ENCODE measurements at regions of chr1 and their contacts with region 1.

Region 1: GRCh38 chr1:155859234-155859829 is at the start of gene SYT11:
- H3K4me3 Mint-ChIP-seq: peak within 1 kb of the TSS; percentile 75
- H3K27ac Mint-ChIP-seq: peak within 1 kb of the TSS; percentile 91
- H3K4me1 Mint-ChIP-seq: peaks cover 39% of the 10 kb centered on the region
- H3K27me3 Mint-ChIP-seq: no peaks in the 10 kb centered on the region

Region 2: DNA sequence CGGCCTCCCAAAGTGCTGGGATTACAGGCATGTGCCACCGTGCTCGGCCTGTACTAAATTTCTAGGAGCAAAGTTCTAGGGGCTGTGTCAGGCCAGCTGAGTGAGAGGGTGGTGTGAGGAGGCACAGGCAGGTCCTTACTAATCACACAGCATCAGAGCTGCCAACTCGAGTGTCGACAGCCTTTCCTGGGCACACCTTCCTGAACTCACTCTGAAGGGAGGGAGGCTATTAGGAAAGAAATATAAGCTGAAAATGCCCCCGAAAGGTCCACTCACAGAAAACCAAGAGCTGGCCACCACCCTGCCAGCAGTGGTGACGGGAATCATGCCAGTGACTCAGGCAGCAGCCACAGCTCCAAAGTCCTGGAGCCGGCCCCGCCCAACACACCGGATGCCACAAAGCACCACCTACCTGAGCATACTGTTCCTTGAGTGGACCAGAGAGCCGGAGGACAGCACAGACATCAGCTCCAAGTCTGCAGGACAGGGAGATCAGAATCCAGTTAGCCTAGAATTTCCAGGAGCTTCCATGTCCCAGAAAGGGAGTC is 927.3 kb before region 1 on chr1:
- intact Hi-C with region 1: no loop called
- H3K4me3 Mint-ChIP-seq: no peak overlapping the region
- H3K27ac Mint-ChIP-seq: no peak overlapping the region
- H3K4me1 Mint-ChIP-seq: peaks cover 33% of the 10 kb centered on the region
- H3K27me3 Mint-ChIP-seq: no peaks in the 10 kb centered on the region

Region 3: GRCh38 chr1:155717041-155717440 is 142.3 kb before region 1 on chr1:
- intact Hi-C with region 1: no loop called
- H3K4me3 Mint-ChIP-seq: no peak overlapping the region
- H3K27ac Mint-ChIP-seq: no peak overlapping the region
- H3K4me1 Mint-ChIP-seq: no peaks in the 10 kb centered on the region
- H3K27me3 Mint-ChIP-seq: no peaks in the 10 kb centered on the region

Region 4: DNA sequence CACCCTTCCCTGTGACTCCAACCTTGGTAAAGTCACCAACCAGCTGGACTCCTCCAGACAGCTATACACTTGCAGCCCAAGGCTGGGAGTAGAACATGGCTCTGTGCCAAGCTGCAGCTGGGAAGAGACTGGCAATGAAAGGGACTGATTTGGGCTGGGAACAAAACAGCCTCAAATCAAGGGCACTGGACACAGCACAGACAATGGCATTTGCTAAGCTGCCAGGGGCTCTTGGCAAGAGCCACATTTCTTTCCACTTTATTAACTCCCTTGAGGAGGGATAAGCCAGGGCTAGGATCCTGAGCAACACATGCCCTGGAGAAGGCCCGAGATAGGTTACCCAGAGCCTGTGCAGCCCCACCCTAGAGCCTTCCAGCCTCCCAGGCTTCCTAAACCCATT is 12.1 kb after region 1 on chr1:
- intact Hi-C with region 1: no loop called
- H3K4me3 Mint-ChIP-seq: no peak overlapping the region
- H3K27ac Mint-ChIP-seq: no peak overlapping the region
- H3K4me1 Mint-ChIP-seq: no peaks in the 10 kb centered on the region
- H3K27me3 Mint-ChIP-seq: no peaks in the 10 kb centered on the region

Region 5: DNA sequence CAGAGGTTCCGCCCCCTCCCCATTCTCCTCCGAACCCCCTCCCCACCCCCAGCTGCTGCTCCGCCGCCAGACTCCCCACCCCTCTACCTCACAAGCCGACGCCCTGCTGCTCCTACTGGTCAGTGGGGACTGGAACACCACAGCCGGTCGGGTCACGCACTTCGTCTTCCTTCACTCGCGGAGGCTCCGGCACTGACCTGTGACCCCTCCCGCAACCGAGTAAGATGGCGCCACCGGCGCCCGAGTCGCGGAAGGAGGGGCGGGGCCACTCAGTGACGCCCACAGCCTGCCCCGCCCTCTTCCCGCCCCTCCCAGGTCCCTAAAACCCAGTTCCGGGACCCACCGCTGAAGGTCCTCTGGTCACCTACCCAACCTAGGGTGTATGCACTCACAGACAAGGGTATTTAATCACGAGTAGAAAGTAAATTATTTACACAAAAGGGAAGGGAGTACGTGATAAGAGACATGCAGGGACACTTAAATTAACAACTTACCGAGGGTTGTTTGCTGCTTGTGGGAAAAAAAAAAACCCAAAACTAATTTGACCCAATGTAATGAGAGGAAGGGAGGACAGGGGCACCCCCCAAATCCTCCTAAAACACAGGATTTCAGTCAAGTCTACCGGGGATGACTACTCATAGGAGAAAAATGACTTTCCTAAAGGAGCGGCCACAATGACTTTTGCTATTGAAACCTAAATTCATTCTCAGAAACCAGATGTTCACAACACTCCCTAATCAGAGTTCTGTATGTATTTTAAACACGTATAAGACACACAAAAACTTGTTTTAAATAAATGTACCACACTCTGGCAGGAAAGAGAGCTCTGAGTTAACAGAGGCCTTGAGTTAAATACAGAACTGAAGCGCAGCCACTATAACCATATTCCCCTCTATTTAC is 52.1 kb after region 1 on chr1 and contains the start of gene RIT1:
- intact Hi-C with region 1: loop called (anchors 2 kb)
- H3K4me3 Mint-ChIP-seq: peak within 1 kb of the TSS; percentile 98
- H3K27ac Mint-ChIP-seq: peak within 1 kb of the TSS; percentile 98
- H3K4me1 Mint-ChIP-seq: peaks cover 15% of the 10 kb centered on the region
- H3K27me3 Mint-ChIP-seq: no peaks in the 10 kb centered on the region

Measured in dendritic cell treated with granulocyte-macrophage colony-stimulating factor and Interleukin-4, amounts not matched to agents 40 ng/mL and 50 ng/mL, for 4 days (primary cell).